ENCODE measurements at regions of chr18 and their contacts with region 1.

Region 1: GRCh38 chr18:60809937-60810336 is 437.4 kb upstream of the MC4R start:
- DNase-seq: no peak
- H3K4me3 Mint-ChIP-seq: no peak overlapping the region
- H3K27ac Mint-ChIP-seq: no peak overlapping the region
- H3K4me1 Mint-ChIP-seq: no peaks in the 10 kb centered on the region
- H3K27me3 Mint-ChIP-seq: no peaks in the 10 kb centered on the region
- CTCF ChIP-seq: no peak

Region 2: DNA sequence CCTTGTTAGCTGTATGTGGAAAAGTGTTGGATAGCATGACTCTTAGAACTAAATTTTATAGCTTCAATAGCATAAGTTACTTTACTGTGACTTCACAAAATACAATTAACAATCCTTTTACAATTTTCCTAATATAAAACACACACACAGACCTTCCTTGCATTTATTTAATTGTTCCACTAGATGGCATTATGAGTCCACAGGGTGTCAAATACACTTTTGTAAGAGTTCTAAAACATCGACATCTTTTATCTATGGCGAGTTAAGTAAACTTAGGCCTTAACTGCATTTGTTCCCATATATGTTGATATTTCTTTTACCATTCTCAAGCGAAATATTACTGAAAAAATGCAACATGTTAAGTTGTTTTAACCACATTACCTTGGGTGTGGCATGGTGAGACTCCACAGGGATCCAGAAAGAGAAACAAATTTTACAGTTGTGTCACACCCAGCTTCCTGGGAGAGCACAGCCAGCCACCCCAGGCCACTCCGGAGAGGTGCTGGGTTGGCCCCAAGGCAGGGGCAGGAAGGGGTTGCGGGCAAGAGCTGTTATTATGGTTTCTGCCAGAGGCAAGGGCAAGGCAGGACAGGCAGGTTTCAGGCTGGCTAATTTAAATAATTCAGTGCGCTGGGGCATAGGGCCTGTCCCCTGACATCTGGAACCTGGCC is 125.0 kb before region 1 on chr18:
- CTCF ChIA-PET with region 1: no interaction called
- intact Hi-C with region 1: loop called (anchors 5 kb)
- DNase-seq: no peak
- H3K4me3 Mint-ChIP-seq: no peak overlapping the region
- H3K27ac Mint-ChIP-seq: no peak overlapping the region
- H3K4me1 Mint-ChIP-seq: no peaks in the 10 kb centered on the region
- H3K27me3 Mint-ChIP-seq: no peaks in the 10 kb centered on the region
- CTCF ChIP-seq: peak; percentile 41

Region 3: DNA sequence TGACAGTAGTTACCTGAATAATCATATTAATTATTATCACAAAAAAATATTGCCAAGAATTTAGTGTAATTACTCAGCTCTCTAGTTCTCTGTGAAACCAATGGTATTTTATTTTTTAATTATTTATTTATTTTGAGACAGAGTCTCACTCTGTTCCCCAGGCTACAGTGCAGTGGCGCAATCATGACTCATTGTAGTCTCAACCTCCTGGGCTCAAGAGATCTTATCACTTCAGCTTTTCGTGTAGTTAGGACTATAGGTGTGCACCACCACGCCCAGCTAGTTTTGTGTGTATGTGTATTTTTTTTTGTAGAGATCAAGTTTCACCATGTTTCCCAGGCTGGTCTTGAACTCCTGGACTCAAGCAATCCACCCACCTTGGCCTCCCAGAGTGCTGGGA is 82.9 kb after region 1 on chr18:
- CTCF ChIA-PET with region 1: interaction called, 5 read pairs
- intact Hi-C with region 1: loop called (anchors 5 kb)
- DNase-seq: peak; percentile 81
- H3K4me3 Mint-ChIP-seq: peak overlapping the region; percentile 28
- H3K27ac Mint-ChIP-seq: peak overlapping the region; percentile 97
- H3K4me1 Mint-ChIP-seq: peaks cover 52% of the 10 kb centered on the region
- H3K27me3 Mint-ChIP-seq: no peaks in the 10 kb centered on the region
- CTCF ChIP-seq: no peak

Region 4: GRCh38 chr18:60910534-60910933 is 100.6 kb after region 1 on chr18:
- CTCF ChIA-PET with region 1: no interaction called
- intact Hi-C with region 1: no loop called
- DNase-seq: no peak
- H3K4me3 Mint-ChIP-seq: no peak overlapping the region
- H3K27ac Mint-ChIP-seq: no peak overlapping the region
- H3K4me1 Mint-ChIP-seq: no peaks in the 10 kb centered on the region
- H3K27me3 Mint-ChIP-seq: no peaks in the 10 kb centered on the region
- CTCF ChIP-seq: no peak

Region 5: DNA sequence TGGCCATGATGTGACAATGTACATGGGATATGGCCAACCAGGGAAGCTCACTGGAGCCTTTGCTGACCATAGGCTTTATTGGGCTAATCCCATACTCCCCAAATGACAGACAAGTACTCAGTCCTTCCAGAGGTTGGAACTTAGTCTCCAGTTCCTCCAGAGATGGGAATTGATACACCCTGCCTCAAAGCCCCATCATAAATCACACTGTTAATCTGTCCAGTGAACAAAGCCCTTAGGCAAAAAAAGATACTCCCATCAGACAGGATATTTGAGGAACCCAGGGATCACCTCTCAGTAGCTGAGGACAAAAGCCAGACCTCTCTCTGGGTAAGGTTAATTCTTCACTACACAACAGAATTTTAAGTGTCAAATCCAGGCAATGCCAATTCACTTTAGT is 275.8 kb after region 1 on chr18:
- CTCF ChIA-PET with region 1: interaction called, 3 read pairs
- intact Hi-C with region 1: loop called (anchors 5 kb)
- DNase-seq: no peak
- H3K4me3 Mint-ChIP-seq: no peak overlapping the region
- H3K27ac Mint-ChIP-seq: no peak overlapping the region
- H3K4me1 Mint-ChIP-seq: no peaks in the 10 kb centered on the region
- H3K27me3 Mint-ChIP-seq: no peaks in the 10 kb centered on the region
- CTCF ChIP-seq: no peak

Region 6: DNA sequence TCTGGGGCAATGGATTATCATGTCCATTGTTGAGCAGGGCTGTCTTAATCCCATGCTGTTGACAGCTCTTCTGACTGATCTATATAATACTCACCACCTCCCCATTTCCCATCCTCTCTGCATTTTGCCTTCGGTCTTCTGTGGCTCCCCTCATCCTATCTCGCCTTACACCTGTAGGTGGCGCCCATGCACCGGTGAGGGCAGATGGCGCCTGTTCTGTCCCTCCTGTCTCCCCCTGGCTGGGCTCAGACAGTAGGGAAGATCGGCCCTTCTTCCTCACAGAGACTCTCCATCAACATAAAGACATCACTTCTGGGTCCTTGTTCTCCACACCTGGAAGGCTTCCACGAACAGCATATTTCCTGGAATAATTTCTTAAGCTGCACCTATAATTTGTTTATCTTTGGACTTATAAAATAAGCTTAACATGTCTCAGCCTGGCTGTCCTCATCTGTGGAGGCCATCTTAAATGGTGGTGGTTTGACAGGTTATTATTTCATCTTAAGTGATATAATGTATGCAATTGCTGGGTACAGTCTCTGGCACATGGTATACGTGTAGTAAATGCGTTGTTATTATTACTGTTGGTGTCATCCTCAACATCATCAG is 512.4 kb after region 1 on chr18:
- CTCF ChIA-PET with region 1: no interaction called
- intact Hi-C with region 1: loop called (anchors 5 kb)
- DNase-seq: peak; percentile 87
- H3K4me3 Mint-ChIP-seq: no peak overlapping the region
- H3K27ac Mint-ChIP-seq: no peak overlapping the region
- H3K4me1 Mint-ChIP-seq: no peaks in the 10 kb centered on the region
- H3K27me3 Mint-ChIP-seq: no peaks in the 10 kb centered on the region
- CTCF ChIP-seq: peak; percentile 96

Region 7: DNA sequence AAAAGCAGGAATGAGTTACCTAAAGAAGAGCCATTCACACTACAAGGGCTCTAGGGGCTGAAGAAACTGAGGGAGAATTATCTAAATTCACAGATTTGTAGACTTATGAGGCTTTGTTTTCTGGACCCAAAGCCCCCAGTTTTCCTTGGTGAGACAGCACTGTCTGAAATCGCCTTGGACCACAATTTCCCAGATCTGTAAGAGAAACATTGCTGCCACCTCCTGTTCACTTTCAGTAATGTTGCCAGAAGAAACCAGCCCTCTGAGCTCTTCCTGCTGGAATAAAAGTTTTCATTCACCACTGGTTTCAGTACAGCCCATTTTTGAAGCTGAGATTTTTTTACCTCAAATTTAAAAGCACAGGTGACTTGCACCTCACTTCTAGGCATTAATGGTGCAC is 692.5 kb after region 1 on chr18:
- CTCF ChIA-PET with region 1: interaction called, 3 read pairs
- intact Hi-C with region 1: loop called (anchors 2 kb)
- DNase-seq: peak; percentile 60
- H3K4me3 Mint-ChIP-seq: no peak overlapping the region
- H3K27ac Mint-ChIP-seq: no peak overlapping the region
- H3K4me1 Mint-ChIP-seq: peaks cover 15% of the 10 kb centered on the region
- H3K27me3 Mint-ChIP-seq: peaks cover 17% of the 10 kb centered on the region
- CTCF ChIP-seq: peak; percentile 54